Calu3 (cell line): ENCODE measurements at regions of chr2 and their contacts with region 1.

Region 1: GRCh38 chr2:143259368-143259958 is 130.2 kb downstream of the ARHGAP15 start:
- DNase-seq: peak; percentile 58
- H3K4me3 Mint-ChIP-seq: peak overlapping the region; percentile 39
- H3K27ac Mint-ChIP-seq: no peak overlapping the region
- H3K4me1 Mint-ChIP-seq: no peaks in the 10 kb centered on the region
- H3K27me3 Mint-ChIP-seq: no peaks in the 10 kb centered on the region
- CTCF ChIP-seq: peak; percentile 69

Region 2: DNA sequence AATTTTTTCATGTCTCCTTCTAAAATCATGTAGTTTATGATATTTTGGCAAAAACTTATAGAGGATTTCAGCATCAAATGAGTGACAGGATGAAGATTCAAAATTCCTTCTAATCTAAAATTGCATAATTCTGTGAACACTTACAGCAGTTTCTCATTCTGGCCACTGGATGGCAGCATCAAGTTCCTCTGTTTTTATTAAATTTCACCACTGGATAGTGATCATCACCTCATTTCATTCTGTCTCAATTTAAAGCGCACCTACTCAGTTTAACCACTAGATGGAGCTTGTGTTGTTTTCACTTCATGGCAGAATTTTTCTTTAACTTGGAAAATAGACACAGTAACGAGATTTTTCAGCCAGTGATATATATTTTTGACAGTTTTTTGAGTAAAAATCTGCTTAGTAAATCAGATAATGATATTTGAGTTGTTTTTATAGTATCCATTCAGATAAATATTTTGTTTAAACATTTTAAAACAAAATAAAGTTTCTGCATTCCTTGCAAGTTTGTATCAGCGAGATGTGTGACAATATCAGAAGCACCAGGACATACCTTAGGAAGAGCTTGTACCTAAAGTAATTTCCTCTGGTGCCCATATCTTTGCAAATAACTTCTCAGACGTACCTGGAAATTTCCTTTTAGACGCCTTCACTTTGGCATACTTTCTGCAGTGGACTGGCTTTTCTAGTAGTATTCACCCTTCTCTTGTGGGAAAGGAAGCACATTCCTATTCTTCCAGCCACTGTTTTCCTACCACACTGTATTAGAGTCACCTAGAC is 225.0 kb before region 1 on chr2:
- CTCF ChIA-PET with region 1: interaction called, 5 read pairs
- intact Hi-C with region 1: loop called (anchors 1 kb)
- DNase-seq: peak; percentile 56
- H3K4me3 Mint-ChIP-seq: no peak overlapping the region
- H3K27ac Mint-ChIP-seq: no peak overlapping the region
- H3K4me1 Mint-ChIP-seq: no peaks in the 10 kb centered on the region
- H3K27me3 Mint-ChIP-seq: no peaks in the 10 kb centered on the region
- CTCF ChIP-seq: peak; percentile 69

Region 3: DNA sequence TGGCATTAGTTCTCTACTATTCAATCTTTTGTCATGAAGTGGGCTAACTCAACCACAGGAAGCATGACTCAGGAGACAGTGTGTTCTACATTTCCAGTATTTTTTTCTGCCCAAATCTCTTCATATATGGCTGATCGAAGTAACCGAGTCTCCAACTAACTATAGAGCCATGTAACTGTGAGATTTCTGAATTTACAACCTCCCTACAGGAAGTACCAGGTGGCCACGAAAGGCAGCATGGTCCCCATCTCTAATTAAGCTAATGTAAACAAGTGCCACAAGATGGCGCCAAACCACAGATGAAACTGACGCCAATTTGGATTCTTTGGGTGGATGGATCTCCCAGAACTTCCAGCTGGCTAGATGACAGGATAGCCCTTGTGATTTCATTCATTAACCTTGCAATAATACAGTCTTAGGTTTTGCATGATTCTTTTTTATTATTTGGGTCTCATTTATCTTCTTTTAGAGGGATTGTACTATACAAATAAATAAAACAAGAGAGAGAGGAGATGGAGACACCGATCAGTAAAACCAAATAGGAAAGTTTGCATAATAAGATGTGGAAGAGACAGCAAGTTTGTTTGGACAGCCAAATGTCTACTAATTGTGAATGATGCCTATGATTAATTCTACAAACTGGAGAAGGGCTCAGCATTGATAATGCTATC is 148.6 kb before region 1 on chr2:
- CTCF ChIA-PET with region 1: interaction called, 5 read pairs
- intact Hi-C with region 1: loop called (anchors 1 kb)
- DNase-seq: peak; percentile 61
- H3K4me3 Mint-ChIP-seq: no peak overlapping the region
- H3K27ac Mint-ChIP-seq: no peak overlapping the region
- H3K4me1 Mint-ChIP-seq: no peaks in the 10 kb centered on the region
- H3K27me3 Mint-ChIP-seq: no peaks in the 10 kb centered on the region
- CTCF ChIP-seq: peak; percentile 48

Region 4: DNA sequence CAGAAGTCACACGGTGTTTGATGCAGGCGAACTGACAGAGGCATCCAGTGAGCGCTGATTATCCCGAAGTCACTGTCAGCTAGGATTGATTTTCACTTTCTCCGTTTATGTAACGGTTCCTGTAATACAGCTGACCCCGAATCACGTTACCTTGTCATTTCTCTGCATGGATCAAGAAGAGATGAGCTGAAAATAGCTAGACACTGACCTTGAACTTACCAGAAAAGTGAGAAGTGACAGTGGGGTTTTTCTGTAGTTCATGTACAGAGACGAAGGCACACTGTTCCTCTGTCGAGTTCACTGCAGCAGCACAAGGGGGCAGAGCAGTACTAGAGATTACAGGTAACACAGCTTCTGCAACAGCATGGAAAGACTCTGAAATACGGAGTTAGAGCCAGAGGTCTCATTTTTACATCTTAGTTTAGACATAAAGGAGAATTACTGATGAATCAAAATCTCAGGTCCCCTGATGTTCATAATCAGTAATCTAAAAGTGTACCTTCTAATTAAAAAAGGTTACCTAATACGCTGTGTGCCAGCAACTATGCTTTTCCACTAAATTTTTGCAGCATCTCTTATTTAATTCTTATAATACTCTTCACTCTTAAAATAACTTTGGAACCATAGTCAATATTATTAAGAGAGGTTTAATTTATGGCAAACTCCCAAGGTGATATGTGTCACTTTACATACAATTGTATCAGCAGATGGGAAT is 97.2 kb before region 1 on chr2:
- CTCF ChIA-PET with region 1: interaction called, 6 read pairs
- intact Hi-C with region 1: loop called (anchors 1 kb)
- DNase-seq: peak; percentile 44
- H3K4me3 Mint-ChIP-seq: no peak overlapping the region
- H3K27ac Mint-ChIP-seq: no peak overlapping the region
- H3K4me1 Mint-ChIP-seq: no peaks in the 10 kb centered on the region
- H3K27me3 Mint-ChIP-seq: no peaks in the 10 kb centered on the region
- CTCF ChIP-seq: peak; percentile 58

Region 5: DNA sequence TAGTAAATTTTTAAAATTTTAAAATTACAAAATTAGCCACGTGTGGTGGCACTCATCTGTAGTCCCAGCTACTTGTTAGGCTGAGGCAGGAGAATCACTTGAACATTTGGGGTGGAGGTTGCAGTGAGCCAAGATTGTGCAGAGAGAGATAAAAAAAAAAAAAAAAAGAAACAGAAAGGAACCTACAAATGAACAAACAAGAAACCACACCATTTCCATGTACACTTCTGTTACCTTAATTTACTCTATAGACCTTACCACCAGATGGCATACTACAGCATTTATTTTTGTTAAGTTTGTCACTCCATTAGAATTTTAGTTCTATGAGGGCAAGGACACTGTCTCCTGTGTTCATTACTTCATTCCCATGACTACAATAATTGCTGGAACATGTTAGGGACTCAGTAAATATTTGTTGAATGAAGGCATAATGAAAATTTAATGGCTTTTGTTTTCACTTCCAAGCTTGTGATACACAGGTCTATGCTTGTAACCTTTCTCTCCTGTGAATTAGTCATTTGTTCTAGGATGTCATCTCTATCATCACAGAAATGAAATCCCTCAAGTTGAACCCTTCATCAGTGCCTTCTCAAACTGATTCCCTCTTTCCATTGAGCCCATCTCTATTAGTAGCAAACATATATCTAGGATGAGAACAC is 54.2 kb before region 1 on chr2:
- CTCF ChIA-PET with region 1: no interaction called
- intact Hi-C with region 1: loop called (anchors 1 kb)
- DNase-seq: no peak
- H3K4me3 Mint-ChIP-seq: no peak overlapping the region
- H3K27ac Mint-ChIP-seq: no peak overlapping the region
- H3K4me1 Mint-ChIP-seq: no peaks in the 10 kb centered on the region
- H3K27me3 Mint-ChIP-seq: no peaks in the 10 kb centered on the region
- CTCF ChIP-seq: peak; percentile 50

Region 6: GRCh38 chr2:143329288-143329687 is 69.8 kb after region 1 on chr2:
- CTCF ChIA-PET with region 1: no interaction called
- intact Hi-C with region 1: no loop called
- DNase-seq: no peak
- H3K4me3 Mint-ChIP-seq: no peak overlapping the region
- H3K27ac Mint-ChIP-seq: no peak overlapping the region
- H3K4me1 Mint-ChIP-seq: no peaks in the 10 kb centered on the region
- H3K27me3 Mint-ChIP-seq: no peaks in the 10 kb centered on the region
- CTCF ChIP-seq: no peak